Breast epithelium (tissue), 4 donors: ENCODE measurements at regions of chr3 and their contacts with region 1.

Region 1: GRCh38 chr3:62982795-62983455 is 107.7 kb upstream of the CADPS start:
- DNase-seq: no peak
- H3K4me3 ChIP-seq: no peak overlapping the region
- H3K27ac ChIP-seq: no peak overlapping the region
- H3K4me1 ChIP-seq: no peaks in the 10 kb centered on the region
- H3K27me3 ChIP-seq: no peaks in the 10 kb centered on the region
- CTCF ChIP-seq: no peak
- POLR2A ChIP-seq: no peak

Region 2: DNA sequence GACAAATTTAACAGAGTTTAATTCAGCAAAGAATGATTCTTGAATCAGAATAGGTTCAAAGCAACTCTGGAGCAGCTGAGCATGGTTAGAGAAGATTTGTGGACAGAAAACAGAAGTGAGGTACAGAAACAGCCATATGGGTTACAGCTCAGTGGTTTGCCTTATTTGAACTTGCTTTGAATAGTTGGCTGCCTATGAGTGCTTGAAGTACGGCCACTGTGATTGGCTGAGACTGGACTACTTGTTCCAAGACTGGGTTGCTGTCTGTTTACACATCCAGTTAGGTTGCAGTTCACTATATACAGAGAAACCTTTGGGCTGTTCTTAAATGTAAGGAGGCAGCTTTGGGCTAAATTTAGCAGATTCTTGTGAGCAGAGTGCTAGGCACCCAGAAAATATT is 28.3 kb before region 1 on chr3:
- intact Hi-C with region 1: loop called (anchors 2 kb)
- DNase-seq: no peak
- H3K4me3 ChIP-seq: no peak overlapping the region
- H3K27ac ChIP-seq: no peak overlapping the region
- H3K4me1 ChIP-seq: no peaks in the 10 kb centered on the region
- H3K27me3 ChIP-seq: no peaks in the 10 kb centered on the region
- CTCF ChIP-seq: no peak
- POLR2A ChIP-seq: no peak

Region 3: DNA sequence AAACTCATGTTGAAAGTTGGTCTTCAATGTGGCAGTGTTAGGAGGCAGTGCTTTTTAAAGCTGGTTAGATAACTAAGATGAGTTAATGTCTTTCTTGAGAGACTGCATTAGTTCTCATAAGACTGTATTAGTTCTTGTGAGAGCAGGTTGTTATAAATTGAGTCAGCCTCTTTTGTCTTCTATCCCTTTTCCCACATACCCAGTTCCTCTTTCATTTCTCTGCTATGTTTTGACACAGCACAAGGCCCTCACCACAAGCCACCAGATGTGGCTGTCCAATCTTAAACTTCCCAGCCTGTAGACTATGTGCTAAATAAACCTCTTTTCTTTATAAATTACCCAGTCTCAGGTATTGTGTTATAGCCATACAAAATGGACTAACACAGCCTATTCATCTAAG is 575.0 kb after region 1 on chr3:
- intact Hi-C with region 1: loop called (anchors 5 kb)
- DNase-seq: no peak
- H3K4me3 ChIP-seq: no peak overlapping the region
- H3K27ac ChIP-seq: no peak overlapping the region
- H3K4me1 ChIP-seq: no peaks in the 10 kb centered on the region
- H3K27me3 ChIP-seq: no peaks in the 10 kb centered on the region
- CTCF ChIP-seq: no peak
- POLR2A ChIP-seq: no peak

Region 4: DNA sequence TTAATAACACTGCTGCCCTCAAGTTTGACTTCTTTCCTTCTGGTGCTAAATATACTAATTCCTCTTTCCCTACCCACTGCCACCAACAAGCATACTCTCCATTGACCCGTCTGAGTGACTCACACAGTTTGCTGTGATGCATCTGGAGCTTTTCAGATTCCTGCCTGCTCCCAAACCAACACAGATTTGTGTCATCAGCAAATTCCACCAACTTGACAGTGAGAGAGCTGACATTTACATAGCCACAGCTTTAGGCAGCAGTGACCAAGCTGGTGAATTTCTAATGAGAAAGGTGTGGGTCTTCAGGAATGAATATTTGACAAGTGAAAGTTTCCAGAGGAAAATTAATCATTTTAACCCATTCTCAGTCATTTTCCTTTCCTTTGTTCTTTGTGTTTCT is 1338.8 kb after region 1 on chr3:
- intact Hi-C with region 1: no loop called
- DNase-seq: no peak
- H3K4me3 ChIP-seq: no peak overlapping the region
- H3K27ac ChIP-seq: no peak overlapping the region
- H3K4me1 ChIP-seq: no peaks in the 10 kb centered on the region
- H3K27me3 ChIP-seq: no peaks in the 10 kb centered on the region
- CTCF ChIP-seq: no peak
- POLR2A ChIP-seq: no peak

Region 5: GRCh38 chr3:64890006-64890405 is 1907.1 kb after region 1 on chr3:
- intact Hi-C with region 1: no loop called
- DNase-seq: no peak
- H3K4me3 ChIP-seq: no peak overlapping the region
- H3K27ac ChIP-seq: peak overlapping the region in 1 of 2 donors; percentile 5
- H3K4me1 ChIP-seq: no peaks in the 10 kb centered on the region
- H3K27me3 ChIP-seq: no peaks in the 10 kb centered on the region
- CTCF ChIP-seq: no peak
- POLR2A ChIP-seq: no peak